ENCODE measurements at regions of chr3 and their contacts with region 1.

Region 1: GRCh38 chr3:25594007-25594502 is 70.7 kb downstream of the TOP2B start:
- DNase-seq: no peak
- H3K4me3 ChIP-seq: no peak overlapping the region
- H3K27ac ChIP-seq: no peak overlapping the region
- H3K4me1 ChIP-seq: peaks cover 0 to 4% (median 2%) of the 10 kb centered on the region in 4 experiments; a peak in 3 of 7 replicates
- H3K27me3 ChIP-seq: no peaks in the 10 kb centered on the region
- CTCF ChIP-seq: peak in 2 of 3 experiments; percentile 54 to 61; a peak in 2 of 4 replicates
- EP300 ChIP-seq: no peak
- POLR2A ChIP-seq: no peak
- RAD21 ChIP-seq: peak; percentile 66 to 78

Region 2: DNA sequence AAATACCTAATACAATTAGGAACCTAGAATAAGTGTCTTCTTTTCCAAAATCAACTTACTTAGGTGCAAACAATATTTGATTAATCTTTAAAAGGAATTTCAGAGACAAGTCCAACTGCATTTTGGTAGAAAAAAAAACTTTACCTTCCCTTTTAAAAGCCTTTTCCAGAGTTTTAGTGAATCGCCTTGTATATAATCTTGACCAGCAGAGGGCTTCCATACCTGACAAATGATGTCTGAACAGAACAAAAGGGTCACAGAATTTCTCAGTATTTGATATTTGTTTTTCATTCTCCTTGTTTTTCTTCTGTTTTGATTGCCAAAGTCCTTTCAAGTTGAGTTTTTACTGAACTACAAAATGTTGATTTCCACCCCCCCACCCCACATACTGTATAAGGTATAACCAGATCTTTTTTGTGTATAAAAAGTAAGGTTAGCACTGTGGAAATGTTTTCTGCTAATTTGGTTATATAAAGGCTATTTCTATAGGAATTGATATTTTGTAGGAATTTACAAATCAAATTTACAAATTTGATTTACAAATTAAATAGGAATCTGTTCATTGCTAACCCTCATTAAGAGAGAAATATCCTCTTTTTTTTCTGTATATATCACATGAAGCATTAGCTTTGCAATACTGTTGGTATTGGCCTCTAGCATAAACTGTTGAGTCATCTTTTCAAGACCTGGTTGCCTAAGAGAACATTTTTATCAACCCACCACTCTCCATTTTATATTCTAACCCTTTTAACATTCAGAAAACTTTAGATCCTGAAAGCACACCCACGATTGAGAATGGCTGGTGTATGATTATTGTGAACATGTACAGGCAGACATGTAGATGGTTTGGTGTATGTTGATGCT is 630.1 kb before region 1 on chr3:
- CTCF ChIA-PET with region 1: interaction called, 10 read pairs
- POLR2A ChIA-PET with region 1: no interaction called
- DNase-seq: no peak
- H3K4me3 ChIP-seq: no peak overlapping the region
- H3K27ac ChIP-seq: no peak overlapping the region
- H3K4me1 ChIP-seq: no peaks in the 10 kb centered on the region
- H3K27me3 ChIP-seq: peaks cover 0 to under 1% (median 0%) of the 10 kb centered on the region in 4 experiments; a peak in 3 of 7 replicates
- CTCF ChIP-seq: peak in 2 of 3 experiments; percentile 49 to 63; a peak in 2 of 4 replicates
- EP300 ChIP-seq: no peak
- POLR2A ChIP-seq: no peak
- RAD21 ChIP-seq: peak; percentile 72 to 74

Region 3: GRCh38 chr3:25033407-25034029 is 560.5 kb before region 1 on chr3:
- CTCF ChIA-PET with region 1: interaction called, 28 read pairs
- POLR2A ChIA-PET with region 1: interaction called, 3 read pairs
- DNase-seq: peak; percentile 31 to 69
- H3K4me3 ChIP-seq: no peak overlapping the region
- H3K27ac ChIP-seq: no peak overlapping the region
- H3K4me1 ChIP-seq: no peaks in the 10 kb centered on the region
- H3K27me3 ChIP-seq: peaks cover 0 to 1% (median 0%) of the 10 kb centered on the region in 4 experiments; a peak in 1 of 7 replicates
- CTCF ChIP-seq: peak; percentile 72 to 93 (median 74)
- EP300 ChIP-seq: no peak
- POLR2A ChIP-seq: no peak
- RAD21 ChIP-seq: peak; percentile 67 to 75

Region 4: GRCh38 chr3:25566358-25566920 is 27.6 kb before region 1 on chr3:
- CTCF ChIA-PET with region 1: interaction called, 138 read pairs
- POLR2A ChIA-PET with region 1: no interaction called
- DNase-seq: no peak
- H3K4me3 ChIP-seq: no peak overlapping the region
- H3K27ac ChIP-seq: no peak overlapping the region
- H3K4me1 ChIP-seq: no peaks in the 10 kb centered on the region
- H3K27me3 ChIP-seq: no peaks in the 10 kb centered on the region
- CTCF ChIP-seq: peak; percentile 10 to 32 (median 22); a peak in 2 of 4 replicates
- EP300 ChIP-seq: no peak
- POLR2A ChIP-seq: no peak
- RAD21 ChIP-seq: peak; percentile 8 to 37; a peak in 2 of 4 replicates

Region 5: DNA sequence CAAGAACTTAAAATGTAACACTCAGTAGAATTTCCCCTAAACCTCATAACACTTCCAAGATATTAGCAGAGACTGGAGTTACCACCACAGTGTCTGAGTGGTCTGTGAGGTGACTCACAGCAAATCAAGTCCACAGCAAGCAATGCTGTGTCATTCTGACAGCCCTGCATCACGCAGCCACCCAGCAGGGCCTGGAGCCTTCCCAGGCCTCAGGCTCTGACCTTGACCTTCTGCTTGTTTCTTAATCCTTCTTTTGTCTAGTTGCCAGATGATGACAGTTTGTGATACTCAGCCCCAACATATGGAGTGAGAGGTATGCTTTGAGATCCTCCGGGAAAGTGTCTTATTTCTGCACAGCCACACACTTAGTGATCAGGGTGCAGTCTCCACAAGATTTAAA is 11.8 kb before region 1 on chr3:
- CTCF ChIA-PET with region 1: interaction called, 138 read pairs
- POLR2A ChIA-PET with region 1: interaction called, 3 read pairs
- DNase-seq: no peak
- H3K4me3 ChIP-seq: no peak overlapping the region
- H3K27ac ChIP-seq: no peak overlapping the region
- H3K4me1 ChIP-seq: no peaks in the 10 kb centered on the region
- H3K27me3 ChIP-seq: no peaks in the 10 kb centered on the region
- CTCF ChIP-seq: no peak
- EP300 ChIP-seq: no peak
- POLR2A ChIP-seq: no peak
- RAD21 ChIP-seq: no peak

Region 6: GRCh38 chr3:25621087-25621486 is 27.0 kb after region 1 on chr3:
- CTCF ChIA-PET with region 1: no interaction called
- POLR2A ChIA-PET with region 1: no interaction called
- DNase-seq: no peak
- H3K4me3 ChIP-seq: no peak overlapping the region
- H3K27ac ChIP-seq: no peak overlapping the region
- H3K4me1 ChIP-seq: no peaks in the 10 kb centered on the region
- H3K27me3 ChIP-seq: no peaks in the 10 kb centered on the region
- CTCF ChIP-seq: no peak
- EP300 ChIP-seq: no peak
- POLR2A ChIP-seq: no peak
- RAD21 ChIP-seq: no peak